Heart left ventricle (tissue), 16 donors: ENCODE measurements at regions of chr5 and their contacts with region 1.

Region 1: DNA sequence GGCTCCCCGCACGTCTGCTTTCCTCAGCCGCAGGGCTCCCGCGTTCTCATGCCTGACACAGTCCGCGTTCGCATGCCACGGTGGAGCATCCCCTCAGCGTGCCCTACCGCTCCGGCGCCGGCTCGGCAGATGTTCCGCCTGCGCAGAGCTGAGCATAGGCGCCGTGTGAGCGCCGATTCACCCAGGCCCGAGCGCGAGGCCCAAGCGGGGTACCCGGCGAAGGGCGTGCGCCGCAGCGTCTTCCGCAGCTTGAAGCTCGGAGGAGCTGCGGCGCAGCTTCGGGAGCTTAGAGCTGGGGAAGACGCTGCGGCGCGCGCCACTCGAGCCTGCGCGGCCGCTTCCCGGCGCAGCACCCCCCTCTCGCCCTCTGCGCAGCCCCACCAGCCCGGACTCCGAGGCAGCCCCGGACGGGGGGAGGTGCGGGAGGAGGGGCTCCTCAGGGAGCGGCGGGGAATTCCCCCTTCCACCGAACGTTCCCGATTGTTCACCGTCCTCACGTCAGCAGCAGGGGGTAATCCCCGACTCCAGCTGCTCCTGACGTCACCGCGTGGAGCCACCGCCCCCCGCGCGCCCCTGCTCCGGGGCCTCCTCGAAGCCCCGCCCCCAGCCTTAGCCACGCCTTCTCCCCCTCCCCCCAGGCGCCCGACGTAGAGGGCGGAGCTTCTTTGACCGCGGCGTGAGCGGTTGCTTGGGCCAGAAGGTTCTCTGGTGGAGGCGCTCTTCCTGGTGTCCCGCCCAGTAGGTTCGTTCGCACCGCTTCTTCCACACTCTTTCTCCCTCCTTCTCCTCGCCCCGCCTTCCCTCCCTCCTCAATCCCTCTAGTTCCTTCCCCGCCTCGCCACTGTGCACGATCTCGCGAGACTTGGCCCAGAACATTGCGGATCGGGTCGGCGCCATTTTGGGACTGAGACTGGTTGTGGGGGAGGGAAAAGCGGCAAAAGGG is at the start of gene GPBP1:
- DNase-seq: peak; percentile 99
- ATAC-seq: peak; percentile 91 to 95 (median 94)
- H3K4me3 ChIP-seq: peak within 1 kb of the TSS; percentile 71 to 98 (median 89)
- H3K27ac ChIP-seq: peak within 1 kb of the TSS; percentile 94 to 100 (median 99)
- H3K4me1 ChIP-seq: peaks cover 8 to 45% (median 26%) of the 10 kb centered on the region in 12 donors
- H3K27me3 ChIP-seq: no peaks in the 10 kb centered on the region
- CTCF ChIP-seq: peak in 1 of 12 donors; percentile 3
- POLR2A ChIP-seq: peak in 1 of 2 donors; percentile 45
- total RNA-seq, gene GPBP1: 41.8 to 60.9 (median 50.1) TPM

Region 2: GRCh38 chr5:56909294-56910209 is 263.9 kb before region 1 on chr5 and contains the start of gene SETD9:
- intact Hi-C with region 1: loop called in 2 of 10 experiments (anchors 2 kb)
- DNase-seq: peak; percentile 99 to 100 (median 99)
- ATAC-seq: peak; percentile 95 to 97 (median 97)
- H3K4me3 ChIP-seq: peak within 1 kb of the TSS; percentile 51 to 86 (median 68)
- H3K27ac ChIP-seq: peak within 1 kb of the TSS; percentile 85 to 99 (median 95)
- H3K4me1 ChIP-seq: peaks cover 0 to 16% (median 9%) of the 10 kb centered on the region in 12 donors
- H3K27me3 ChIP-seq: no peaks in the 10 kb centered on the region
- CTCF ChIP-seq: no peak
- POLR2A ChIP-seq: peak; percentile 28 to 75
- total RNA-seq, gene SETD9: 8.6 to 21.0 (median 14.0) TPM

Region 3: DNA sequence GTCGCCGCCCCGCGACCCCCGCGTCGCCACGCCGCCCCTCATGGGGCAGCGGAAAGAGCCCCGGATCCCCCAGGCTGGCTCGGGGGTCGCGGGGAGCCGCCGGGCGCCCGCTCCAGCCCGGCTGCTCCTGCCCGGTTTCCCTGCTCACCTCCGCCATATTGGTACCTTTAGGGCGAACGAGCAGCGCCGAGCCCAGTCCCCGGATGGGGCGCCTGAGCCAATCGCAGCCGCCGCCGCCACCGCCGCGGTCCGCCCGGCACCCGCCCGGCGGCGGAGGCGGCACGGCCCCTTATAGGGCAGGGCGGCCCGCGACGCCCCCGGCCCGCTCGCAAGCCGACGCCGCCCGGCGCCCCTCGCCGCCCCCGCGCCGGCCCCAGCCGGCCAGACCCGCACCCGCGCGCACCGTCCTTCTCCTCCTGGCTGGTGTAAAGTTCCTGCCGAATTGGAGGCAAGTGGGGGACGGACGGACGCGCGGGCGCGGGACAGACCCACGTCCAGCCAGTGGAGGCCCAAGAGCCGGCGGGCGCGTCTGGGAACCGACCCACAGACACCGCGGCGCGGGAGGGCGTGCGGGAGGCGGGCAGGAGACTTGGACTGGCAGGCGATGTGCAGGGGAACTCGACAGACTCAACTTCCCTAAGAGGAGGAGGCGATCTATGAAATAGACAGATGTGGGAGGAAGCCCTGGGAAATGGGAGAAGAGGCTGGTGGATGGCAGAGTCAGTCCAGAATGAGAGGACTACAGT is 221.3 kb before region 1 on chr5 and contains the start of gene MIER3:
- intact Hi-C with region 1: loop called in 2 of 10 experiments (anchors 2 to 5 kb)
- DNase-seq: peak; percentile 85 to 88 (median 86)
- ATAC-seq: peak; percentile 79 to 98 (median 94)
- H3K4me3 ChIP-seq: peak within 1 kb of the TSS; percentile 73 to 97 (median 88)
- H3K27ac ChIP-seq: peak within 1 kb of the TSS; percentile 67 to 93 (median 84)
- H3K4me1 ChIP-seq: peaks cover 0 to 24% (median 16%) of the 10 kb centered on the region in 12 donors
- H3K27me3 ChIP-seq: peaks cover 0 to 20% (median 0%) of the 10 kb centered on the region in 9 donors
- CTCF ChIP-seq: no peak
- POLR2A ChIP-seq: no peak
- total RNA-seq, gene MIER3: 9.3 to 15.5 (median 10.8) TPM

Region 4: DNA sequence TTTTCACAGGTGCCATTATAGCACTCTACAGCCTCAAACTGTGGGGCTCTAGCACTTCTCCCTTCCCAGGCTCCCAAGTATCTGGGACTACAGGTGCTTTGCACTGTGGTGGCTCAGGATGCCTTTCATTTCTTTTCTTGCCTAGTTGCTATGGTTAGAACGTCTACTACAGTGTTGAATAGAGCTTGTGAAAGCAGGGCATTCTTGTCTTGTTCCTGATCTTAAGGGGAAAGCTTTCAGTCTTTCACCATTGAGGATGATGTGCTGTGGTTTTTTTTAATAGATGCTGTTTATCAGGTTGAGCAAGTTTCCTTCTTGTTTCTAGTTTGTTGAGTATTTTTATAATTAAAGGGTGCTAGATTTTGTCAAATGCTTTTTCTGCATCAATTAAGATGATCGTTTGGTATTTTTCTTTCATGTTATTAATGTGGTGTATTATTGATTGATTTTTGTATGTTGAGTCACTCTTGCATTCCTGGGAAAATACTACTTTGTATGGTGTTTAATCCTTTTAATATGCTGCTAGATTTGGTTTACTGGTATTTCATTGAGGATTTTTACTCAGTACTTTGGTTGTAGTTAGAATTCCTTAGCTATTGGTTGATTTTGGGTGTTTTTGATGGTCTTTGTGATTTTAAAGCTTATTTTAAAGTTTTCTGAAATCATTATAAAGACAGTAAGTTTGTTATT is 36.0 kb after region 1 on chr5:
- intact Hi-C with region 1: loop called in 8 of 10 experiments (anchors 5 kb)
- DNase-seq: no peak
- ATAC-seq: no peak
- H3K4me3 ChIP-seq: no peak overlapping the region
- H3K27ac ChIP-seq: peak overlapping the region in 4 of 12 donors; percentile 10 to 90 (median 63)
- H3K4me1 ChIP-seq: peaks cover 2 to 62% (median 44%) of the 10 kb centered on the region in 12 donors
- H3K27me3 ChIP-seq: no peaks in the 10 kb centered on the region
- CTCF ChIP-seq: no peak
- POLR2A ChIP-seq: no peak